WTC11 (cell line): ENCODE measurements at regions of chr16 and their contacts with region 1.

Region 1: DNA sequence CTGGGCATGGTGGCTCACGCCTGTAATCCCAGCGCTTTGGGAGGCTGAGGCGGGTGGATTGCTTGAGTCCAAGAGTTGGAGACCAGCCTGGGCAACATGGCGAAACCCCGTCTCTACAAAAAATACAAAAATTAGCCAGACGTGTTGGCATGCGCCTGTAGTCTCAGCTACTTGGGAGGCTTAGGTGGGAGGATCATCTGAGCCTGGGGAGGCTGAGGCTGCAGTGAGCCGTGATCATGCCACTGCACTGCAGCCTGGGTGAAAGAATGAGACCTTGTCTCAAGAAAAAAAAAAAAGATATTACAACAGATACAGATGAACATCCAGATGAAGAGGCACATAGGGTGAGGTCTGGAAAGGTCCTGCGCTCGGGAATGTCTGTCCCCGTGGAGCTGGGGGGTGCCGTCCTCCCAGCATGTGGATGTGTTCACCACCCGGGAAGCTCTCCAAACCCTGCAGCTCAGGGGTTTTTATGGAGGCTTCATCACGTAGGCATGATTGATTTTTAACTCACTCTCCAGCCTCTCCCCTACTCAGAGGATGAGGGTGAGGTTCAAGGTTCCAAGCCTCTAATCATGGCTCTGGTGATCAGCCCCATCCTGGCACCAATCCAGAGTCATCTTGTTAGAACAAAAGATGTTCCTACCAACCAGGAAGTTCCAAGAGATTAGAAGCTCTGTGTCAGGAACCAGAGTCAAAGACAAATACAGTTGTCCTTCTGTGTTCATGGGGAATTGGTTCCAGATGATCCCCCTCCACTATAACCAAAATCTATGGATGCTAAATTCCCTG is 85.0 kb upstream of the DNAJA2 start:
- DNase-seq: no peak
- ATAC-seq: no peak
- H3K4me3 Mint-ChIP-seq: no peak overlapping the region
- H3K27ac Mint-ChIP-seq: no peak overlapping the region
- H3K4me1 Mint-ChIP-seq: no peaks in the 10 kb centered on the region
- H3K27me3 Mint-ChIP-seq: no peaks in the 10 kb centered on the region
- CTCF ChIP-seq: no peak

Region 2: DNA sequence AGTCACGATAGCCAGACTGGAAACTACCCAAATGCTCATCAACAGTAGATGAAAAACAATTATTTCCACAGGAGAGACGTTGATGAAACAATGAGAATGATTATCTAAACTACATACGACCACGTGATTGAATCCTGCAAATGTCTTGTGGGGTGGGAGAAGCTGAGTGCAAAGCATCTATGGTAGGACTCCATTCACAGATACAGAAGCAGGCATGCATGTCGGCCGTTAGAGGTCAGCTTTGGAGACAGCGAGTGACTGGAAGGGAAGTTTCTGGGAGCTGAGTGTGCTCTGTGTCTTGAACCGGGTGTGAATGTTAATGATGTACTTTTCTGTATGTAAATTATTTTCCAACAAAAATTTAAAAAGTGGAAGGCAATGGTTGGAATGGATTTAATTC is 13.5 kb before region 1 on chr16:
- CTCF ChIA-PET with region 1: interaction called, 10 read pairs
- POLR2A ChIA-PET with region 1: interaction called, 3 read pairs
- DNase-seq: no peak
- ATAC-seq: no peak
- H3K4me3 Mint-ChIP-seq: no peak overlapping the region
- H3K27ac Mint-ChIP-seq: no peak overlapping the region
- H3K4me1 Mint-ChIP-seq: peaks cover 3% of the 10 kb centered on the region
- H3K27me3 Mint-ChIP-seq: no peaks in the 10 kb centered on the region
- CTCF ChIP-seq: no peak